ENCODE measurements at regions of chr14 and their contacts with region 1.

Region 1: DNA sequence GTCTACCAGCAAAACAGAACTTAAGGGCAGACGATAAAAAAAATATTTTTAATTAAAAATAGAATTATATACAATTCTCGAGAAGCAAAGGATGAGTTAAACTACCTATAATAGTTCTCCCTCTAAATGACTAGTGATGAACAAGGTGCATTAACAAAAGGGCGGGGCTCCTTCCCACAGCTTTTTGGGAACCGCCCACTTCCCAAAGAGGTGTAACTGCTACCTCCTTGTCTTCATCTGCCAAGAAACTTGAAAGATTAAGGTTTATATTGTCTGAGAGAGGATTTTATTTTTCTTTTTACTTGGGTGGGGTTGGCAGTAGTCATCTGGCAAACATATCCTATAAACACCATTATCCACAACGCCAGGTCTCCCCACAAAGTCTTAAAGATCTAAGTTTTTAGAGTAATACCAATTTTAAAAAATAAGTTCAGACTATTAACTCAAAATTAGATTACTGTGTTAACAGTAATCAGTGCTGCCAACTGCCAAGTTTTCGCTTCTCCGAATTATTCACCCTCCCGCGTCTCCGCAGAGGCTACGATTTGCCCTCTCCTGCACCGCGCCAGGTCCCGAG is 931 bp downstream of the RALGAPA1 start:
- DNase-seq: peak in 3 of 9 experiments; percentile 16 to 63 (median 41)
- ATAC-seq: no peak
- H3K4me3 ChIP-seq: peak overlapping the region; percentile 68 to 80
- H3K4me3 Mint-ChIP-seq: peak overlapping the region; percentile 98
- H3K27ac ChIP-seq: peak overlapping the region; percentile 49 to 86
- H3K27ac Mint-ChIP-seq: peak overlapping the region; percentile 92
- H3K4me1 ChIP-seq: peaks cover 15% of the 10 kb centered on the region
- H3K4me1 Mint-ChIP-seq: peaks cover 38% of the 10 kb centered on the region
- H3K27me3 ChIP-seq: no peaks in the 10 kb centered on the region
- H3K27me3 Mint-ChIP-seq: no peaks in the 10 kb centered on the region
- CTCF ChIP-seq: no peak

Region 2: DNA sequence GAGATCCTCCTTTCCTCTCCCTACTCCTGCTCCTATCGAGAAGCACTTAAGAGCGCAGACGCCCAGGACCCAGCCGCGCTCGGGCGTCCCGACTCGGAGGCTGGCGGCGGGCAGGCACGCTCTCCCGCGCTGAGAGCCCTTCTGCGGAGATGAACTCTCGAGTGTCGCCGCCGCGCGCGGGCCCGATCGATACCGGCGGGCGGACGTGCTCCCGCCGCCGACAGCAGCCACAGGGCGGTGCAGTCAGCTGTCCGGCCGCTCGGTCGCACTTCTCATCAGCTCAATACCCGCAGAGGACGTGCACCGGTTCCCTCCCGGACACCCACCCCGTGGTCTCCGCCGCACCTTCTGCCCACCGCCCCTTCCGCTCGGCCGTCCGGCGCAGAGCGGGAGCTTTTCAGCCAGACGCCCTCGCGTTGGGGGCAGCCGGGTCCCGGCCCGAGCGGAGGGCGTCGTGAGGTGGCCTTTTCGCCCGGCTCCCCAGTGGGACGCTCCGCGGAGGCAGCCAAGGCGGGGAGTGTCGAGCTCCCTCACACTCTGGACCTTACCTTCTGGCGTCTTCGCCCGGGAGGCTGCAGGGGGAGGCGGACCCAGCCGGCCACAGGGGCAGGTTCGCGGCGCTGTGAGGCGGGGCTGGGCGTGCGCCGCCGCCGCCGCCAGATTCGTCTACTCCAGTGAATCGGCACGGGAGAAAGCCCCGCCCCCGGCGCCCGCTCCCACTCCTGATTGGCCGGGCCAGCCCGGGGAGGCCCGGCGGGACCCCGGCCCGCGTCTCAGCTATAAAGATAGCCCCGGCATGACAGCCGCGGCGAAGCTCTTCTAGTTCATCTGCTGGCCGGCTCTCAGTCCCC is 274.6 kb before region 1 on chr14 and contains the start of gene INSM2:
- CTCF ChIA-PET with region 1: no interaction called
- POLR2A ChIA-PET with region 1: no interaction called
- intact Hi-C with region 1: loop called in 1 of 2 experiments (anchors 10 kb)
- DNase-seq: peak in 7 of 9 experiments; percentile 31 to 54 (median 51)
- ATAC-seq: peak; percentile 39
- H3K4me3 ChIP-seq: peak within 1 kb of the TSS; percentile 53 to 54
- H3K4me3 Mint-ChIP-seq: peak within 1 kb of the TSS; percentile 81
- H3K27ac ChIP-seq: no peak within 1 kb of the TSS
- H3K27ac Mint-ChIP-seq: no peak within 1 kb of the TSS
- H3K4me1 ChIP-seq: peaks cover 19% of the 10 kb centered on the region
- H3K4me1 Mint-ChIP-seq: peaks cover 16% of the 10 kb centered on the region
- H3K27me3 ChIP-seq: peaks cover 16 to 35% of the 10 kb centered on the region in 2 experiments
- H3K27me3 Mint-ChIP-seq: peaks cover 41% of the 10 kb centered on the region
- CTCF ChIP-seq: no peak
- total RNA-seq, gene INSM2: not detected

Region 3: DNA sequence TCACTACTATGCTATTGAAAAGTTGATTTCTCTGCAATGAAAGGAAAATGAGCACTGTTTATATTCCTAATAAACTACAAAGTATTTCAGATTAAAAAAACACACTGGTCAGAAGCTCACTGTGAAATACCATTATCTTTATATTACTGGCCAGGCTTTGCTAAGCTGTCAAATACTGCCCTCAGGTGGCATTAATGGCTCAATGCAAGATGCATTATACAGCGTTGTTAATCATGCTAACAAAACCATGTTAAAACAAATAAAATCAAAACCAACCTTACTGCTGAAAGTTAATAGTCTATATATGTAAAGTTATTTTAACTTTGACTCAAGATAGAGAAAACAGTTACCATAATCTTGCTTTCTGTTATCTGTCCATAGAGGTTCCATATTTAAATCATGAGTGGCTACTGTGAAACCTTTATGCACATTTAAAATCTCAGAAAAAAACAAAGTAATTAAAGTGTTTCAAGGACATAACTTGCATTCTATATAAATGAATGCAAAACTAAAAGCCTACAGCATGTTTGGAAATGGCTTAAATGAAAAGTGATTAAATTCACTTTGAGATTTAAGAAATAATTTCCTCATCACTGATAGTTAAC is 120.7 kb before region 1 on chr14:
- CTCF ChIA-PET with region 1: no interaction called
- POLR2A ChIA-PET with region 1: no interaction called
- intact Hi-C with region 1: no loop called
- DNase-seq: peak in 5 of 9 experiments; percentile 3 to 53 (median 24)
- ATAC-seq: peak; percentile 46
- H3K4me3 ChIP-seq: no peak overlapping the region
- H3K4me3 Mint-ChIP-seq: no peak overlapping the region
- H3K27ac ChIP-seq: no peak overlapping the region
- H3K27ac Mint-ChIP-seq: no peak overlapping the region
- H3K4me1 ChIP-seq: no peaks in the 10 kb centered on the region
- H3K4me1 Mint-ChIP-seq: no peaks in the 10 kb centered on the region
- H3K27me3 ChIP-seq: no peaks in the 10 kb centered on the region
- H3K27me3 Mint-ChIP-seq: no peaks in the 10 kb centered on the region
- CTCF ChIP-seq: peak; percentile 73

Region 4: GRCh38 chr14:35766700-35767082 is 41.5 kb before region 1 on chr14:
- CTCF ChIA-PET with region 1: no interaction called
- POLR2A ChIA-PET with region 1: no interaction called
- intact Hi-C with region 1: loop called in 1 of 2 experiments (anchors 5 kb)
- DNase-seq: peak in 2 of 9 experiments; percentile 15 to 18
- ATAC-seq: peak; percentile 49
- H3K4me3 ChIP-seq: no peak overlapping the region
- H3K4me3 Mint-ChIP-seq: no peak overlapping the region
- H3K27ac ChIP-seq: no peak overlapping the region
- H3K27ac Mint-ChIP-seq: no peak overlapping the region
- H3K4me1 ChIP-seq: peaks cover 16% of the 10 kb centered on the region
- H3K4me1 Mint-ChIP-seq: peaks cover 18% of the 10 kb centered on the region
- H3K27me3 ChIP-seq: no peaks in the 10 kb centered on the region
- H3K27me3 Mint-ChIP-seq: no peaks in the 10 kb centered on the region
- CTCF ChIP-seq: no peak

Region 5: DNA sequence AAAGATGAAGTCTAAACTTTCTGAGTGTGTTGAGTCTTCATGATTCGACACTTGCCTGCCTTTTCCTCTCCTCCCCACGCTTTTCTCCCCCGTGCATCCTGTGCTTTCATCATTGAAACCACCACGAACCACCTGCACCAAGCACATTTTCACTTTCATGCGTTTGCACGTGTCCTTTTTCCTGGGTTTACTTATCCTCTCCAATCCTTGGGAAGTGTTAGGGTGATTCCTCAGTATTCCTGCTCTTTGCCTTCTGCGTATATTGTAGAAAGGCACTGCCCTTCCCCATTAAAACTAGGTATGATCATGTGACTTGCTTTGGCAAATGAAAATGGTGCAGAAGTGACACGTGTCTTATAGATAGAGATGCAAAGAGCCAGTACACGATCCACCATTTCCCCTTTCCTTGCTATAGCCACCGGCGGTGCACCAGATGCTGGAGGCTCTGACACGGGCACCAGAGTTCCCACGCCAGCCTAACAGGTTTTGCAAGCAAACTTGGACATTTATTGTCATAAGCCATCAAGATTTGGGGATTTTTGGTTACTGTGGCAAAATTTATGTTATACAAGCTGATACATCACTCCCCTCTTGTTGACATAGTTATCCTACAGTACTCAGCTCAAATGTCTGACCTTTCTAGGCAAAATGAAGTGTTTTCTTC is 124.6 kb after region 1 on chr14:
- CTCF ChIA-PET with region 1: no interaction called
- POLR2A ChIA-PET with region 1: no interaction called
- intact Hi-C with region 1: loop called in 1 of 2 experiments (anchors 5 kb)
- DNase-seq: peak in 6 of 9 experiments; percentile 9 to 65 (median 28)
- ATAC-seq: peak; percentile 79
- H3K4me3 ChIP-seq: peak overlapping the region; percentile 31 to 56
- H3K4me3 Mint-ChIP-seq: peak overlapping the region; percentile 88
- H3K27ac ChIP-seq: peak overlapping the region in 1 of 2 experiments; percentile 30
- H3K27ac Mint-ChIP-seq: peak overlapping the region; percentile 90
- H3K4me1 ChIP-seq: peaks cover 17% of the 10 kb centered on the region
- H3K4me1 Mint-ChIP-seq: peaks cover 36% of the 10 kb centered on the region
- H3K27me3 ChIP-seq: no peaks in the 10 kb centered on the region
- H3K27me3 Mint-ChIP-seq: no peaks in the 10 kb centered on the region
- CTCF ChIP-seq: no peak